GM10248 (cell line): ENCODE measurements at regions of chr16 and their contacts with region 1.

Region 1: GRCh38 chr16:78002915-78003538 is 19.3 kb upstream of the CLEC3A start:
- DNase-seq: peak; percentile 80
- CTCF ChIP-seq: peak; percentile 83

Region 2: GRCh38 chr16:77236063-77236511 is 766.9 kb before region 1 on chr16:
- CTCF ChIA-PET with region 1: interaction called, 11 read pairs
- POLR2A ChIA-PET with region 1: no interaction called
- DNase-seq: peak; percentile 87
- CTCF ChIP-seq: peak; percentile 98

Region 3: DNA sequence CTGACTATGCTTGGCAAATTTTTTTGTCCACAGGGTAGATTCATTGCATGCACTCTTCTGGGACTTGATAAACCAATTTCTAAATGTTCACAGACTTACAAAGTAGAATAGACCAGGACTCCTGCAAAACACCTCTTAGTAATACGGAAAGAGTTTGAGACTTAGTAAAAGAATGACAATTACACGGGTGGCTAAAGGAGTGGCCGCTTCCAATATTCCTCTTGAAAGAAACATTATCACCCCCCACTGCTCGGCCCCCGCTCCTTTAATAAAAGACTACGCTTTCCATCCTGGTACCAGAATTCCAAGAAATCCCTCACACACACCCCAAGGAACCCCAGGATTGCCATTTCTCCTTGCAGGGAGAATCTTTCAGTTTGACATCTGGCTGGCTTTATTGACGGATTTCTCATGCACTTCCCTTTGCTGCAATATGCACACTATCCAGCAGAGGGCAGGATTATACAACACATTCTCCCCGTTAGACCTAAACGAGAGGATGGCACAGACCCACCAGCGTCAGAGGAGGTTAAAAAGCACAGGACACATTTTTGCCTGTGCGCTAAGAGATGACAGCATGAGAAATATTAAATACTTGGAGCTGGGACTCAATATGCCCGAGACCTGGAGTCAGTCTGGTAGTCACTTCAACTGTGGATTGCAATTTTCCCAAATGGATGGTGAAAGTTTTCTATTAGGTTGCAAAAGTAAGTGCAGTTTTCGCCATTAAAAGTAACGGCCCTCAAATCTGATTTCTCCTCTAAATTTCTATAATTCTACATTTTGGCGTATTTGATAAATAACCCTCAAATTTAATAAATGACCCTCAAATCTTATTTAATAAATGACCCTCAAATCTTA is 327.3 kb before region 1 on chr16:
- CTCF ChIA-PET with region 1: interaction called, 32 read pairs
- POLR2A ChIA-PET with region 1: no interaction called
- DNase-seq: peak; percentile 61
- CTCF ChIP-seq: peak; percentile 87

Region 4: GRCh38 chr16:77971306-77972271 is 31.4 kb before region 1 on chr16:
- CTCF ChIA-PET with region 1: interaction called, 30 read pairs
- POLR2A ChIA-PET with region 1: no interaction called
- DNase-seq: peak; percentile 62
- CTCF ChIP-seq: peak; percentile 74

Region 5: GRCh38 chr16:77987810-77988209 is 15.2 kb before region 1 on chr16:
- CTCF ChIA-PET with region 1: interaction called, 24 read pairs
- POLR2A ChIA-PET with region 1: no interaction called
- DNase-seq: no peak
- CTCF ChIP-seq: no peak

Region 6: GRCh38 chr16:78028018-78028417 is 25.0 kb after region 1 on chr16:
- CTCF ChIA-PET with region 1: interaction called, 18 read pairs
- POLR2A ChIA-PET with region 1: no interaction called
- DNase-seq: no peak
- CTCF ChIP-seq: no peak